ENCODE measurements at regions of chr6 and their contacts with region 1.

Region 1: GRCh38 chr6:152118678-152119077 is 311.2 kb downstream of the ESR1 start:
- DNase-seq: no peak
- H3K4me3 ChIP-seq: no peak overlapping the region
- H3K27ac ChIP-seq: no peak overlapping the region
- H3K4me1 ChIP-seq: no peaks in the 10 kb centered on the region
- H3K27me3 ChIP-seq: no peaks in the 10 kb centered on the region
- CTCF ChIP-seq: no peak

Region 2: DNA sequence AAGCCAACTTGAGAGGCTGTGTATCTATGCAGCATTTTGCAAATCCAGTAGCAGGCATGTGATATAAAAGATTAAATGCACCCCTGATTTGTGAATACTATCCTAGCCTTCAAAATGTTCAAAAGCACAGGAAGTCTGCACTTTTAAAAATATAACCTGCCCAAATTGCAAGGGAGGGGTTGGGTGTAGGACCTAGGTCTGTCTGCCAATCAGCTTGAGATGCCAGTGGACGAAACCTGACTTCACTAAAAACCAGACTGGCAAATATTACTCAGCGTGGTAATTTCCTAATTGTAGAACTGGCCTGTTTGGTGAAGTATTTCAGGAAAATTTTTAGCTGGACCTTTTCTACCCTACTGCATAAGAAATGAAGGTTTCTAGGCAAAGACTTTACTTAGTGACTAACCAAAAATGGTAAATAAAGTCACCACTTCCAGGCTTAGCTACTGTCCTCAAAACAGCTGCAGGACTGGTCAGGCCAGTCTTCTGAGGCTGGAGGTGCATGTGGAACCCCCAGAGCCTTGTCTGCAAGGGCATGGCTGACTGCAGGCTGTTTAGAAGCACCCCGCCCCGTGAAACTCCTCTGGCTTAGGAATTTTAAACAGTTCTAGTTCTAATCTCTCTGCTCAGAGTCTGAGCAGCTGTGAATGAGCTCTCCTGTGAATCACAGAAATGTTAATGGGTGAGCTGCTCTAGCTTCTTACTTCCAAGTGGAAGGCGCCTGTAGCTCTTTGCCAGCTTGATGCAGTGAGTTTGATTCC is 415.6 kb before region 1 on chr6:
- CTCF ChIA-PET with region 1: interaction called, 15 read pairs
- POLR2A ChIA-PET with region 1: no interaction called
- intact Hi-C with region 1: no loop called
- DNase-seq: peak; percentile 14 to 70
- H3K4me3 ChIP-seq: no peak overlapping the region; the same call in 1 of the 2 replicates
- H3K27ac ChIP-seq: peak overlapping the region; percentile 23; the same call in 1 of the 2 replicates
- H3K4me1 ChIP-seq: peaks cover 15% of the 10 kb centered on the region
- H3K27me3 ChIP-seq: no peaks in the 10 kb centered on the region
- CTCF ChIP-seq: no peak